B cell (primary cell): ENCODE measurements at regions of chrX and their contacts with region 1.

Region 1: DNA sequence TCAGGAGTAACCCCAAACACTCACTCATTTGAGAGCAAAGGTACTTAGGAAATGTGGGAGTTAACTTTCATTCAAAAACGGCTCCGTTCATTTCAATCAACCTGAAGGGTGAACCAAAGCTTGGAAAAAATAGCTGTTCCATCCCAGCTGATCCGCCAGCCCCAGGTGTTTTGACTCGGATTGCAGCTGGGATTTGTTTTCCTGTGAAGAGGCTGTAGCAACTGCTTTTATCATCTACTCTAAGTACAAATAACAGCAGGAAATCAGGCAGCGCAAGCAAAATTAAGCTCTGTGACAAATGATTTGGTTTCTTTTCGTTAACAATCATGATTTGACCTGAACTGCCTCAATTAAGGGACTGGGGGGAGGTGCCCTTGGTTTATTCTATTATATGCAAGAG is 154.7 kb downstream of the BEND2 start:
- DNase-seq: no peak
- ATAC-seq: no peak
- H3K4me3 ChIP-seq: no peak overlapping the region
- H3K4me3 Mint-ChIP-seq: no peak overlapping the region
- H3K27ac ChIP-seq: no peak overlapping the region
- H3K27ac Mint-ChIP-seq: no peak overlapping the region
- H3K4me1 ChIP-seq: no peaks in the 10 kb centered on the region
- H3K4me1 Mint-ChIP-seq: no peaks in the 10 kb centered on the region
- H3K27me3 ChIP-seq: no peaks in the 10 kb centered on the region
- H3K27me3 Mint-ChIP-seq: no peaks in the 10 kb centered on the region
- CTCF ChIP-seq: no peak

Region 2: GRCh38 chrX:18098763-18099162 is 32.8 kb after region 1 on chrX:
- CTCF ChIA-PET with region 1: no interaction called
- POLR2A ChIA-PET with region 1: no interaction called
- intact Hi-C with region 1: loop called (anchors 2 kb)
- DNase-seq: no peak
- ATAC-seq: no peak
- H3K4me3 ChIP-seq: no peak overlapping the region
- H3K4me3 Mint-ChIP-seq: no peak overlapping the region
- H3K27ac ChIP-seq: no peak overlapping the region
- H3K27ac Mint-ChIP-seq: no peak overlapping the region
- H3K4me1 ChIP-seq: no peaks in the 10 kb centered on the region
- H3K4me1 Mint-ChIP-seq: no peaks in the 10 kb centered on the region
- H3K27me3 ChIP-seq: no peaks in the 10 kb centered on the region
- H3K27me3 Mint-ChIP-seq: no peaks in the 10 kb centered on the region
- CTCF ChIP-seq: no peak

Region 3: GRCh38 chrX:18129690-18130089 is 63.7 kb after region 1 on chrX:
- CTCF ChIA-PET with region 1: no interaction called
- POLR2A ChIA-PET with region 1: no interaction called
- intact Hi-C with region 1: no loop called
- DNase-seq: no peak
- ATAC-seq: no peak
- H3K4me3 ChIP-seq: no peak overlapping the region
- H3K4me3 Mint-ChIP-seq: no peak overlapping the region
- H3K27ac ChIP-seq: no peak overlapping the region
- H3K27ac Mint-ChIP-seq: no peak overlapping the region
- H3K4me1 ChIP-seq: no peaks in the 10 kb centered on the region
- H3K4me1 Mint-ChIP-seq: no peaks in the 10 kb centered on the region
- H3K27me3 ChIP-seq: no peaks in the 10 kb centered on the region
- H3K27me3 Mint-ChIP-seq: no peaks in the 10 kb centered on the region
- CTCF ChIP-seq: no peak